ENCODE measurements at regions of chr12 and their contacts with region 1.

Region 1: GRCh38 chr12:120580787-120581723 is at the start of gene POP5:
- DNase-seq: peak; percentile 90 to 96 (median 91)
- H3K4me3 ChIP-seq: peak within 1 kb of the TSS; percentile 90 to 94
- H3K4me3 Mint-ChIP-seq: peak within 1 kb of the TSS; percentile 96 to 99 (median 98)
- H3K27ac ChIP-seq: peak within 1 kb of the TSS; percentile 72
- H3K27ac Mint-ChIP-seq: peak within 1 kb of the TSS; percentile 92 to 98 (median 96)
- H3K4me1 ChIP-seq: peaks cover 34% of the 10 kb centered on the region
- H3K4me1 Mint-ChIP-seq: peaks cover 17 to 43% (median 37%) of the 10 kb centered on the region in 4 donors
- H3K27me3 ChIP-seq: no peaks in the 10 kb centered on the region
- H3K27me3 Mint-ChIP-seq: no peaks in the 10 kb centered on the region
- total RNA-seq, gene POP5: 70.4 to 70.7 TPM

Region 2: DNA sequence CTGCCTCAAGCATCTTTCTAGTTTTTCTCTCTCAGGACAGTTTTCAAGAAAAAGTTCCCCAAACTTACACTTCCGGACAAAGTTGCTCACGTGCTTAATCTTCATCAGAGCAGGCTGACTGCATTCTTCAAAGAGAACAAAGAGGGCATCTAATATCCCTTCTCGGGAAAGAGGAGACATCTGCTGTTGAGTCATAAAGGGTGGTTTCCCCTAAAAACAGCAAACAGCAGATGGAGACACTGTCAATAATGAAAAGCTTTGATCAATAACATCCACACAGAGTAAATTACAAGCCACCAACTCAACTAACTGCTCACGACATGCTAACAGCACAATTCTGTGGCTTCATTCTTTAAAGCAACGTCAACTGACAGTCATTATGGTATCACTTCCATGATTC is 712.1 kb before region 1 on chr12:
- CTCF ChIA-PET with region 1: no interaction called
- POLR2A ChIA-PET with region 1: no interaction called
- intact Hi-C with region 1: no loop called
- DNase-seq: no peak
- H3K4me3 ChIP-seq: no peak overlapping the region
- H3K4me3 Mint-ChIP-seq: no peak overlapping the region
- H3K27ac ChIP-seq: no peak overlapping the region
- H3K27ac Mint-ChIP-seq: no peak overlapping the region
- H3K4me1 ChIP-seq: no peaks in the 10 kb centered on the region
- H3K4me1 Mint-ChIP-seq: peaks cover 0 to 2% (median 0%) of the 10 kb centered on the region in 4 donors
- H3K27me3 ChIP-seq: no peaks in the 10 kb centered on the region
- H3K27me3 Mint-ChIP-seq: no peaks in the 10 kb centered on the region

Region 3: GRCh38 chr12:120437754-120438494 is 143.1 kb before region 1 on chr12 and contains the start of gene COX6A1:
- CTCF ChIA-PET with region 1: interaction called, 9 read pairs
- POLR2A ChIA-PET with region 1: interaction called, 6 read pairs
- intact Hi-C with region 1: loop called (anchors 5 kb)
- DNase-seq: peak; percentile 94 to 99 (median 98)
- H3K4me3 ChIP-seq: peak within 1 kb of the TSS; percentile 52 to 70
- H3K4me3 Mint-ChIP-seq: peak within 1 kb of the TSS; percentile 92 to 99 (median 96)
- H3K27ac ChIP-seq: peak within 1 kb of the TSS; percentile 76
- H3K27ac Mint-ChIP-seq: peak within 1 kb of the TSS; percentile 86 to 99 (median 96)
- H3K4me1 ChIP-seq: peaks cover 26% of the 10 kb centered on the region
- H3K4me1 Mint-ChIP-seq: peaks cover 18 to 31% (median 27%) of the 10 kb centered on the region in 4 donors
- H3K27me3 ChIP-seq: no peaks in the 10 kb centered on the region
- H3K27me3 Mint-ChIP-seq: peaks cover under 1 to 3% of the 10 kb centered on the region in 2 donors
- total RNA-seq, gene COX6A1: 144 to 158 TPM

Region 4: GRCh38 chr12:120534203-120534702 is 46.8 kb before region 1 on chr12 and contains the start of gene RNF10:
- CTCF ChIA-PET with region 1: interaction called, 6 read pairs
- POLR2A ChIA-PET with region 1: interaction called, 9 read pairs
- intact Hi-C with region 1: loop called (anchors 2 kb)
- DNase-seq: peak; percentile 85 to 87 (median 86)
- H3K4me3 ChIP-seq: peak within 1 kb of the TSS; percentile 62 to 88
- H3K4me3 Mint-ChIP-seq: peak within 1 kb of the TSS; percentile 92 to 97 (median 94)
- H3K27ac ChIP-seq: peak within 1 kb of the TSS; percentile 94
- H3K27ac Mint-ChIP-seq: peak within 1 kb of the TSS; percentile 95 to 98 (median 96)
- H3K4me1 ChIP-seq: peaks cover 59% of the 10 kb centered on the region
- H3K4me1 Mint-ChIP-seq: peaks cover 43 to 68% (median 49%) of the 10 kb centered on the region in 4 donors
- H3K27me3 ChIP-seq: no peaks in the 10 kb centered on the region
- H3K27me3 Mint-ChIP-seq: no peaks in the 10 kb centered on the region
- total RNA-seq, gene RNF10: 244 to 249 TPM

Region 5: GRCh38 chr12:120725659-120726509 is 144.8 kb after region 1 on chr12 and contains the start of gene ACADS:
- CTCF ChIA-PET with region 1: no interaction called
- POLR2A ChIA-PET with region 1: interaction called, 3 read pairs
- intact Hi-C with region 1: loop called (anchors 1 kb)
- DNase-seq: peak; percentile 84 to 87 (median 86)
- H3K4me3 ChIP-seq: peak within 1 kb of the TSS; percentile 20 to 71
- H3K4me3 Mint-ChIP-seq: peak within 1 kb of the TSS; percentile 90 to 95 (median 91)
- H3K27ac ChIP-seq: peak within 1 kb of the TSS; percentile 56
- H3K27ac Mint-ChIP-seq: peak within 1 kb of the TSS; percentile 72 to 94 (median 90)
- H3K4me1 ChIP-seq: peaks cover 16% of the 10 kb centered on the region
- H3K4me1 Mint-ChIP-seq: peaks cover 13 to 30% (median 20%) of the 10 kb centered on the region in 4 donors
- H3K27me3 ChIP-seq: no peaks in the 10 kb centered on the region
- H3K27me3 Mint-ChIP-seq: no peaks in the 10 kb centered on the region
- total RNA-seq, gene ACADS: 14.9 to 17.1 TPM

Region 6: DNA sequence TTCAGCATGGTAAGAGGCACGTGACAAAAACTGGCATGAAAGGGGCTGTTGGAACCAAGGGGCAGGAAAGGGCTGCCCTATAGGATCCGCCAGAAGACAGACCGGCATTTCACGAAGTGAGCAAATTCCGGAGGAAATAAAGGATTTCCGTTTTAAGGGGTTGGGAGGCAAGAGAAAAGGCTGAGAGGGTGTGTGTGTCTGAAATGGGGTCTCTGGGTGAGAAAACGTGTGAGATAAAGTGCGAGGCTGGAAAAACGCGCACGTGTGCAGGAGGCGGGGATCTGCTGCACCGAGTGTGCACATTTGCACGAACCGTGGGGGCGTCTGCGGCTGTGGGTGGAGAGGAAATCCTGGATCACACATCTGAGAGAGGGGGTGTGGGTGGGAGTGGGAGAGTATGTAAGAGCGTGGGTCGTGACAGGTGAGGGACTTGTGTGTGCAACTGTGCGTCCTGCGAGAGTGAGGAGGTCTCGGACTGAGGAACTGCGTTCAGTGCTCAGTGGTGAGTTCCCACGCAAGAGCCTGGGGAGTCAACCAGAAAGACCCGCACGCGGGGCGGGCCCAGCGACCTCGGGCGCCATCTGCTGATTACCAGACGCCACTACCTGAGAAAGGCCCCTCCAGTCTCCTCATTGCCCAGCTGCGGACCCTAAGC is 514.6 kb after region 1 on chr12:
- CTCF ChIA-PET with region 1: no interaction called
- POLR2A ChIA-PET with region 1: no interaction called
- intact Hi-C with region 1: loop called (anchors 1 kb)
- DNase-seq: peak; percentile 72 to 77 (median 72)
- H3K4me3 ChIP-seq: peak overlapping the region; percentile 58 to 59
- H3K4me3 Mint-ChIP-seq: peak overlapping the region; percentile 76 to 91 (median 84)
- H3K27ac ChIP-seq: no peak overlapping the region
- H3K27ac Mint-ChIP-seq: peak overlapping the region; percentile 16 to 90 (median 76)
- H3K4me1 ChIP-seq: peaks cover 46% of the 10 kb centered on the region
- H3K4me1 Mint-ChIP-seq: peaks cover 34 to 54% (median 45%) of the 10 kb centered on the region in 4 donors
- H3K27me3 ChIP-seq: no peaks in the 10 kb centered on the region
- H3K27me3 Mint-ChIP-seq: peaks cover 1 to 7% of the 10 kb centered on the region in 2 donors